ENCODE measurements at regions of chr3 and their contacts with region 1.

Region 1: DNA sequence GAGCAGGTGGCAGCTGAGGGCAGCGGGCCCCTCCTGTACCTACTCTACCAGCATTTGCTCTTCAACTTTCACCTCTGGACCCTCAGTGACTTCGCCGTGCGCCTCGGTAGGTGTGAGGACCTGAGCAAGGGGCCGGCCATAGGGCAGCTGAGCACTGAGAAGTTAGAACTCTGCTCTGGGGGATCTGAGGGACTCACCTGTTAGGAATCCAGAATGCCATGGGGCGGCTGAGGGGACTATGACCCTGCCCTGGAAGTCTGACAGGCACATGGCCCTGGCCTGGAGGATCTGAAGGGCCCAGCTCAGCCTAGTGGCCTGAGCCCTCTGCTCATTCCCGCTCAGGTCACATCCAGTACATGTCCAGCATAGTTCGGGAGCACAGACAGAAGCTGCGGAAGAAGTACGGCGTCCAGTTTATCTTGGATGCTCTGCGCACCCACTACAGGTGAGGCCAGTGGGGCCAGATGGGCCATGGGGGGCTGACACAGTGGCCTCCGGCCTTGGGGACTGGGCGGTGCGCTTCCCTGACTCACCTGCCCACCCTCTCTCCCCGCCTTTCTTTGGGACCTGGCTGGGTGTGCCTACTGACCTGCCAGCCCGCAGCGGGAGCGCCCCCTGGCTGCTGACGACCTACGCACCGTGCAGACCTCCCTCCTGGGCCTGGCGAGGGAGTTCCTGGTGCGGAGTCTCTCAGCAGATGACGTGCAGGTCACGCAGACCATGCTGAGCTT is 18.8 kb downstream of the NBEAL2 start:
- DNase-seq: peak; percentile 75 to 81 (median 77)
- H3K4me3 ChIP-seq: no peak overlapping the region
- H3K27ac ChIP-seq: no peak overlapping the region
- H3K4me1 ChIP-seq: peaks cover 0 to 35% (median 19%) of the 10 kb centered on the region in 4 experiments
- H3K27me3 ChIP-seq: no peaks in the 10 kb centered on the region

Region 2: DNA sequence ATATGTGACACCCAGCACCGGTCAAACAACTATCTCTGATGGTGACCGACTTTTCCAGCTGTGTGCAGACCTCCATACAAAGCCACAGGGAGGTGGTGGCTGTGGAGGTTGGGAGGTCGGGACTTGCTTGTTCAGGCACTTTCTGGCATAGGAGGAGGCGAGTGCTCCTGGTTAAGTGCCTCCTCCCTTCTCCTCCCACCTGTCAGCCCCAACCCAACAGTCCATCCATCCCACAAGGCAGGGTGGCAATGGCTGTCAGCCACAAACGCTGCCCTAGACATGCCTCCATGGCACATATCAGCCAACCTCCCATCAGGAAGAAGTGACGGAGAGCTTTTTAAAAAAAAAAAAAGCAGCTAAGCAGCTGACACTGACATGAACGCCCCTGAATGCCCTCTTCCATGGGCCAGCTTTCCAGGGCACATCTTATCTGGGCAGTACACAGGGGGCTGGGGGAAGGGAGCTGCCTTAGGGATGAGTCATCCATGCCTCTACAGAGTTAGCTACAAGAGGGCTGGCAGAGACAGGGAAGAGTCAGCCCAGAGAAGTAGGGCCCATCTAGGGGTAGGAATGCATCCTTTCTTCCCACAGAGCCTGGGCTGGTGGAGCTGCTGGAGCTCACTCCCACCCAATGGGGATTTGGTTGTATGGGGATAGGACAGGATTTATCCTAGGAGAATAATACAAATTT is 63.0 kb before region 1 on chr3:
- CTCF ChIA-PET with region 1: interaction called, 164 read pairs
- POLR2A ChIA-PET with region 1: no interaction called
- DNase-seq: peak in 1 of 3 donors; percentile 34
- H3K4me3 ChIP-seq: no peak overlapping the region
- H3K27ac ChIP-seq: peak overlapping the region in 1 of 2 experiments; percentile 15
- H3K4me1 ChIP-seq: peaks cover 27 to 80% (median 53%) of the 10 kb centered on the region in 4 experiments
- H3K27me3 ChIP-seq: no peaks in the 10 kb centered on the region

Region 3: DNA sequence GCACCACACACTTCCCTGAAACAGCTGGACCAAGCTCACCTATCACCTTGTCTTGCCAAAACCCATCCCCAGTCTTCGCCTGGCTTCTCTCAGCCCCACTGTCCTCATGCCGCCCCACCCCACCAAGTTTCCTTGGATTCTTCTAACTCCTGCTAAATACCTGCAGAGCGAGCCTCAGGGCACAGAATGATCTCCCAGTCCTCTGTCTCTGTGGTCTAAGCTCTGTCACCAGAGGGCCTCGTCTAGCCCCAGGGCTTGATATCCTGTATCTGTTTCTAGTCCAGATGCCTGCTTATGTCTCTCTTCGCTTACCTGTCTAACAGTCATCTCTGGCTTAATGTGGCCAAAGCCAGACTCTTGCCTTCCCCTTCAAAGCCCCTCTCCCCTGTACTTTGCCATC is 31.5 kb before region 1 on chr3:
- CTCF ChIA-PET with region 1: interaction called, 11 read pairs
- POLR2A ChIA-PET with region 1: no interaction called
- DNase-seq: no peak
- H3K4me3 ChIP-seq: no peak overlapping the region
- H3K27ac ChIP-seq: no peak overlapping the region
- H3K4me1 ChIP-seq: peaks cover 18 to 67% (median 53%) of the 10 kb centered on the region in 4 experiments
- H3K27me3 ChIP-seq: no peaks in the 10 kb centered on the region

Region 4: GRCh38 chr3:46976326-46977190 is 21.7 kb before region 1 on chr3 and contains the start of gene CCDC12:
- CTCF ChIA-PET with region 1: interaction called, 42 read pairs
- POLR2A ChIA-PET with region 1: interaction called, 3 read pairs
- DNase-seq: peak; percentile 99
- H3K4me3 ChIP-seq: peak within 1 kb of the TSS; percentile 83 to 96 (median 91)
- H3K27ac ChIP-seq: peak within 1 kb of the TSS; percentile 84 to 94
- H3K4me1 ChIP-seq: peaks cover 28 to 76% (median 73%) of the 10 kb centered on the region in 4 experiments
- H3K27me3 ChIP-seq: no peaks in the 10 kb centered on the region

Region 5: DNA sequence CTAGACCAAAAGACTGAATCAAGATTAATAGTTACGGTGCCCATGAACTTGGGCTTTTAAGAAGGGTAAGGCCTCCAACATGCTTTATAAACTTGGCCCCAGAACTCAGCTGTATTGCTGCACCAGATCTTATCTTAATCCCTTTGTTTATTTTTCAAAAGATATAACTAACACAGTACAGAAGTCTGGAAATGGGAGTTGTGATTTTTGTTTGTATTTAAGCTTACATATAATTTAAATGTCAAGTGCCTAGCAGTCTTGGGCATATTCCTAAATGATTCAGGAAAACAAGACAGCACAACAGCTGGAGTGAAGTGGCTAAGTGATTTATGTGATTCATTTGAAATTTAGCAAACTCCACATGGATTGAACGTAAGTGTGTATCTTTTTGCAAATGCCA is 37.3 kb after region 1 on chr3:
- CTCF ChIA-PET with region 1: no interaction called
- POLR2A ChIA-PET with region 1: no interaction called
- DNase-seq: no peak
- H3K4me3 ChIP-seq: no peak overlapping the region
- H3K27ac ChIP-seq: no peak overlapping the region
- H3K4me1 ChIP-seq: peaks cover 0 to 7% (median 4%) of the 10 kb centered on the region in 4 experiments
- H3K27me3 ChIP-seq: no peaks in the 10 kb centered on the region